Heart left ventricle (tissue), 16 donors: ENCODE measurements at regions of chr3 and their contacts with region 1.

Region 1: GRCh38 chr3:71583566-71584449 is at the start of gene FOXP1:
- DNase-seq: peak; percentile 77 to 89 (median 80)
- ATAC-seq: peak; percentile 44 to 80 (median 72)
- H3K4me3 ChIP-seq: peak within 1 kb of the TSS; percentile 65 to 95 (median 82)
- H3K27ac ChIP-seq: peak within 1 kb of the TSS; percentile 92 to 99 (median 98)
- H3K4me1 ChIP-seq: peaks cover 0 to 46% (median 21%) of the 10 kb centered on the region in 12 donors
- H3K27me3 ChIP-seq: no peaks in the 10 kb centered on the region
- CTCF ChIP-seq: no peak
- POLR2A ChIP-seq: peak in 1 of 2 donors; percentile 65
- total RNA-seq, gene FOXP1: 33.0 to 67.8 (median 44.5) TPM

Region 2: DNA sequence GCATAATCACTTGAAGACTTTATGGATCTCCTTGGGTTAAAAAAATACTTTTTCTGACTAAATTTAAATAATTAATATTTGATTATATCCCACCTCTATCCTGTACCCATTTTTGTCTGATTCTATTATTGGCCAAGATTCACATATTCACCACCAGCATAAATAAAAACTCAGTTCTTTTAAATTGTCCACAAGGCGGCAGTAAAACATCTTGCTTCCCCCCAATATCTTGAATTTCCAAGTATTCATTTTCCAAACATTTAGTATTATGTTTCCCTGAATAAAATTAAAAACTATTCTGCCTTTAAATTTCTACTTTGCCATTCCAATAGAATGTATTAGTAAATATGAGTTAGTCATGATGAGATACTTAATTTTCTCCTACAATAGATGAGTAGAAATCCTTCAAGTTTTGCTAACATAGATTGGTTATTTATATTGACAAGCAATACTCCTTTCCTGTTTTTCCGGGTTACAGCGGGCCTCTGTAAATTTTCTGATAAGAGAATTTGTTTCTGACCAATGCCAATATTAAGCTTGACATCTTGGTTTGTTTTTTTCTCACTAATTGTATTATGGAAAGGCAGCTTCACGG is 1052.6 kb before region 1 on chr3:
- intact Hi-C with region 1: loop called in 2 of 10 experiments (anchors 5 kb)
- DNase-seq: no peak
- ATAC-seq: no peak
- H3K4me3 ChIP-seq: no peak overlapping the region
- H3K27ac ChIP-seq: no peak overlapping the region
- H3K4me1 ChIP-seq: no peaks in the 10 kb centered on the region
- H3K27me3 ChIP-seq: peaks cover 0 to 5% (median 0%) of the 10 kb centered on the region in 9 donors
- CTCF ChIP-seq: peak in 11 of 12 donors; percentile 26 to 71 (median 52)
- POLR2A ChIP-seq: no peak

Region 3: GRCh38 chr3:70963431-70964275 is 620.2 kb before region 1 on chr3:
- intact Hi-C with region 1: loop called in 1 of 10 experiments (anchors 10 kb)
- DNase-seq: no peak
- ATAC-seq: peak in 1 of 4 donors; percentile 18
- H3K4me3 ChIP-seq: no peak overlapping the region
- H3K27ac ChIP-seq: peak overlapping the region in 1 of 12 donors; percentile 33
- H3K4me1 ChIP-seq: peaks cover 0 to 15% (median 11%) of the 10 kb centered on the region in 12 donors
- H3K27me3 ChIP-seq: no peaks in the 10 kb centered on the region
- CTCF ChIP-seq: no peak
- POLR2A ChIP-seq: no peak

Region 4: DNA sequence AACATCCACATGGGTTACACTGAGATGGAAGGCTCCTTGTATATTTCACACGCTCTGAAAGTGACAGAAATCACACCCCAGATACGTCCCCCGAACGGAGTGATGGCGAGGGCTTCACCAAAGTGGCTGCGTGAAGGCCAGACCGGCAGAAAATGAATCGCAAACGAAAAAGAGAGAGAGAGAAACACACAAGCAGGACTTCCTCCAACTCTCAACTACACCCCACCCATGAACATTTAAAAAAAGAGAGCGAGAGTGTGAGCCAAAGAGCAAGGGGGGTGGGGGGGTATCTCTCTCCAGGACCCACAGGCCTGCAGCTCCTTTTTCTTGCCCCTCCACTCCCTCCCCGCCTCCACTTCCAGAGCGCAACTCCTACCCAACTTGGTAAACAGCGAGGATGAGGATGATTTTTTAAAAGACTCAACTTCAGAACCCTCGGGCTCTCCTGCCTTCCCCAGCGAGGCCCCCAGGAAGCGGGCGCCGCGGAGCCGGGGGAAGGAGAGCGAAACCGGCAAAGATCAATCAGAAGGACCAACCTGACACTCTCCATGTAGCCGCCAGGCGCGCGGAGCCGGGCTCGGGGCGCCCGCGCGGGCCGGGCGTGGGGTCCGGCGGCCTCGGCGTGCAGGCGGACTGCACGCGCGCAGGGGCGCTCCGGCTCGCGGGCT is 519.4 kb before region 1 on chr3:
- intact Hi-C with region 1: loop called in 9 of 10 experiments (anchors 2 to 5 kb)
- DNase-seq: peak in 3 of 5 donors; percentile 36 to 47 (median 39)
- ATAC-seq: peak; percentile 20 to 60 (median 52)
- H3K4me3 ChIP-seq: peak overlapping the region; percentile 28 to 87 (median 75)
- H3K27ac ChIP-seq: peak overlapping the region; percentile 91 to 99 (median 97)
- H3K4me1 ChIP-seq: peaks cover 5 to 74% (median 51%) of the 10 kb centered on the region in 12 donors
- H3K27me3 ChIP-seq: no peaks in the 10 kb centered on the region
- CTCF ChIP-seq: peak in 2 of 12 donors; percentile 1 to 17
- POLR2A ChIP-seq: no peak

Region 5: GRCh38 chr3:71226565-71227269 is 357.1 kb before region 1 on chr3:
- intact Hi-C with region 1: loop called in 1 of 10 experiments (anchors 5 kb)
- DNase-seq: peak; percentile 61 to 84 (median 72)
- ATAC-seq: peak; percentile 87 to 95 (median 95)
- H3K4me3 ChIP-seq: peak overlapping the region in 10 of 12 donors; percentile 14 to 53 (median 42)
- H3K27ac ChIP-seq: peak overlapping the region; percentile 18 to 82 (median 68)
- H3K4me1 ChIP-seq: peaks cover 0 to 37% (median 25%) of the 10 kb centered on the region in 12 donors
- H3K27me3 ChIP-seq: no peaks in the 10 kb centered on the region
- CTCF ChIP-seq: no peak
- POLR2A ChIP-seq: no peak

Region 6: GRCh38 chr3:71389911-71390573 is 193.8 kb before region 1 on chr3:
- intact Hi-C with region 1: loop called in 2 of 10 experiments (anchors 5 to 10 kb)
- DNase-seq: peak; percentile 54 to 70 (median 62)
- ATAC-seq: peak; percentile 41 to 79 (median 70)
- H3K4me3 ChIP-seq: peak overlapping the region in 7 of 12 donors; percentile 3 to 35 (median 19)
- H3K27ac ChIP-seq: peak overlapping the region in 10 of 12 donors; percentile 2 to 80 (median 32)
- H3K4me1 ChIP-seq: peaks cover 0 to 78% (median 17%) of the 10 kb centered on the region in 12 donors
- H3K27me3 ChIP-seq: no peaks in the 10 kb centered on the region
- CTCF ChIP-seq: no peak
- POLR2A ChIP-seq: no peak

Region 7: GRCh38 chr3:71456156-71456555 is 127.7 kb before region 1 on chr3:
- intact Hi-C with region 1: loop called in 1 of 10 experiments (anchors 10 kb)
- DNase-seq: no peak
- ATAC-seq: no peak
- H3K4me3 ChIP-seq: peak overlapping the region in 2 of 12 donors; percentile 1 to 25
- H3K27ac ChIP-seq: peak overlapping the region in 1 of 12 donors; percentile 72
- H3K4me1 ChIP-seq: peaks cover 0 to 42% (median 12%) of the 10 kb centered on the region in 12 donors
- H3K27me3 ChIP-seq: no peaks in the 10 kb centered on the region
- CTCF ChIP-seq: no peak
- POLR2A ChIP-seq: no peak